ENCODE measurements at regions of chrX and their contacts with region 1.

Region 1: GRCh38 chrX:94831364-94831763 is 1157.4 kb downstream of the FAM133A start:
- DNase-seq: no peak
- ATAC-seq: no peak

Region 2: DNA sequence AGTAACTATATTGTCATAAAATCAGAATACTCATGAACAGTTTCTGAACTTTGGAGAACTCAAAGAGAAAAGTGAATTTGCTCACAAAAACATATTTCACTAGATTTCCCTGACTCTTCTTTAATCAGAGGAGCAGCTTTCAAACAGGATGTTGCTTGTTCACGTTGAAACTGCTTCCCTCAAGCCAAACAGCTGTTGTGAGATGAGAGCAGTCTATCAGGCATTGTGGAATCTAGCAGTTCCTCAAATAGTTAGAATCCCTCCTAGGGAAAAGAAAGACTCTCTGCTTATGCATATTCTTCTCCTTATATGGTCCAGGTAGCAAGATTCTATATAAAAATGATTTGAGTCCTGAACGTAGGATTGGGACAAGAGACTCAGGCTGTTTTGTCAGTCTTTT is 145.3 kb before region 1 on chrX:
- intact Hi-C with region 1: no loop called
- DNase-seq: no peak
- ATAC-seq: no peak

Region 3: DNA sequence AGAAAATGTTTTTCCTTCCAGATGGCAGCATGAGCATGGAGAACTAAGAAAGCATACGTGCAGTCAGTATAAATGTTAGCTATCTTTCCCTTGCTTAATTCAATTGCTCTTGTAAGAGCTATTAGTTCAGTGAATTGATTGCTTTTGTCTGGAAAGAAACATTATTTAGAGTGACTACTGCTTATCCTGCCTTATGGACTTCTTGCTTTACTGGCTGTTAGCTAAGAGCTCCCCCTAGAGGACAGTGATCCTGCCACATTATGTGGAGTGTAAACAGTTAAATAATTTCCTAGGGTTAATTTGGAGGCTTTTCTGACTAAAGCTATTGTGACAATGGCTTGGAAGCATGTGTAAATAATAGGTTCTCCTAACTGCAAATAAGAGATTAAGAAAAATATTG is 245.1 kb after region 1 on chrX:
- intact Hi-C with region 1: loop called (anchors 5 to 10 kb)
- DNase-seq: no peak
- ATAC-seq: no peak

Measured in left cardiac atrium (tissue), 4 donors.